OCI-LY7 (cell line): ENCODE measurements at regions of chr1 and their contacts with region 1.

Region 1: GRCh38 chr1:209755926-209756614 is at the start of gene TRAF3IP3:
- DNase-seq: peak; percentile 86
- H3K4me3 ChIP-seq: peak within 1 kb of the TSS; percentile 69
- H3K27ac ChIP-seq: peak within 1 kb of the TSS; percentile 74
- H3K4me1 ChIP-seq: peaks cover 37% of the 10 kb centered on the region
- CTCF ChIP-seq: no peak
- total RNA-seq, gene TRAF3IP3: 22.1 and 24.3 TPM in 2 replicates

Region 2: DNA sequence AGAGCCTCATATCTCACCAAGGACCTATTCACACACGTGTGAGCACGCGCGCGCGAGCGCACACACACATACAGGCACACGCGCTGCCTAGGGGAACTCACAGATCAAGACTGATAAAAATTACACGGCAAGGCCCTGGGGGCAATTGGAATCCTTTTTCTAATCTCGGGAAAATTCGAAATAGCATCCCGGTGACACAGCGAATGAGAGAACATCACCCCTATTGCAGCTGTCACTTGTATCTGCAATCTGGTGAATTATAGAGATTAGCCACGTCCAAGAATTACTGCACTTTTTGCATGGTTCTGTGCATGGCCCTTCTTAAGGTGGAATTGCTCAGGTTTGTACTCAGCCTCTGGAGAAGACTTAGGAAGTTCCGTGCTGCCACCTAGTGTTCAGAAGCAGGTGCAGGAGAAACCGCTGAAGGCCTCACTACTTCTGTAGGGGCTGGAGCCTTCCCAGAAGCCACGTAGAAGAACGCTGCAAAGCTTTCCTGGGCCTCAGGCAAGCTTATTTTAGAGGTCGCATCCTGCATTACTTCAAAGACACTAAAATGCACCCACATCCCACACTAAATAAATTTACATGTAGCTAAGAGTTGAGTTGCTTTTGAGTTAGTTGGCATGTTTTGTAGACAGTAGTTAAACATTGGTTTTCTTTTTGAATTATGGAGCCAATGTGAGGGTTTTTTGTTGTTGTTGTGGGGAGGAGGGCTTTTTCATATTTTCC is 401.8 kb before region 1 on chr1:
- CTCF ChIA-PET with region 1: no interaction called
- POLR2A ChIA-PET with region 1: no interaction called
- intact Hi-C with region 1: no loop called
- DNase-seq: peak; percentile 63
- H3K4me3 ChIP-seq: no peak overlapping the region
- H3K27ac ChIP-seq: no peak overlapping the region
- H3K4me1 ChIP-seq: no peaks in the 10 kb centered on the region
- CTCF ChIP-seq: peak; percentile 88

Region 3: GRCh38 chr1:209769171-209769904 is 13.3 kb after region 1 on chr1:
- CTCF ChIA-PET with region 1: interaction called, 5 read pairs
- POLR2A ChIA-PET with region 1: interaction called, 50 read pairs
- intact Hi-C with region 1: no loop called
- DNase-seq: peak; percentile 73
- H3K4me3 ChIP-seq: peak overlapping the region; percentile 10
- H3K27ac ChIP-seq: peak overlapping the region; percentile 63
- H3K4me1 ChIP-seq: peaks cover 34% of the 10 kb centered on the region
- CTCF ChIP-seq: no peak

Region 4: GRCh38 chr1:209774592-209774991 is 18.5 kb after region 1 on chr1:
- CTCF ChIA-PET with region 1: interaction called, 5 read pairs
- POLR2A ChIA-PET with region 1: interaction called, 50 read pairs
- intact Hi-C with region 1: no loop called
- DNase-seq: peak; percentile 44
- H3K4me3 ChIP-seq: peak overlapping the region; percentile 20
- H3K27ac ChIP-seq: peak overlapping the region; percentile 40
- H3K4me1 ChIP-seq: peaks cover 33% of the 10 kb centered on the region
- CTCF ChIP-seq: no peak

Region 5: DNA sequence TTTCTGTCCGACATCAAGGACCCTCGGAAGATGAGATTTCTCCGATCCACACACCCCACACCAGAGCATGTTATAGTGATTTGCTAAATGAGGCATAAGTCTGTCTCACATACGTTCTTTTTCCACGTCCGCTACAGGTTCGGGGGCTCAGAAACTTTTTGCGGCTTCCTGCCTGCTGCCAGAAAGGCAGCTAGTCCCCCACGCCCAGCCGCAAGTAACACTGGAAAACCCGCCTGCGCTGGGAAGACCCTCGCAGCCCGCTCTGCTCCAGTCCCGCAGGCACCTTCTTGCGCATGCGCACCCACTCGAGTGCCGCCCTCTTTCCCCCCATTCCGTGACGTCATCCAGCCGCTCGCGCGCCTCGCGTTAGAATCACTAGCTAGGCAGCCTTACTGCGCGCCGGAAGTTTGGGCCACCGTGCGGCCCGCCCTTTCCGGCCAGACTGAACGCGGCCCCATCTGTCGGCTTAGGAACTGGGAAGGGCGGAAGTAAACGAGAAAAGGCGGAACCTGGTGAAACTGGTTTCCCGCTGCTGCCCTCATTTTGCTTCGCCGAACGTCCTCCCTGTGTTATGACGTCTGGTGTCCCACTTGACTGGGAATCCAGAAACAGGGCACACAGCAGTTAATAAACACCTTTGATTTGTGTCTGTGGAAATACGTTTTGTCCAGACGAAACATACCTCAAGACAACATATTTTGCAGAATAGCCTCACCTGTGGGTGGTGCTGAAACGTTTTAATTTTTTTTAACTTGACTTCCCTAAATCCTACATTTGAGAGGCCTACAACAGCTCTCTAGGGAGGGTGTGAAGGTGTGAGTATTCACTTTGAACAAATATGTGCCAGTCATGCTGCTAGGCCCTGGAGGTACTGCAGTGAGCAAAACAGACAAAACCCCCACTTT is 28.4 kb after region 1 on chr1 and contains the start of gene C1orf74:
- CTCF ChIA-PET with region 1: no interaction called
- POLR2A ChIA-PET with region 1: interaction called, 21 read pairs
- intact Hi-C with region 1: loop called (anchors 1 kb)
- DNase-seq: peak; percentile 98
- H3K4me3 ChIP-seq: peak within 1 kb of the TSS; percentile 93
- H3K27ac ChIP-seq: peak within 1 kb of the TSS; percentile 52
- H3K4me1 ChIP-seq: peaks cover 15% of the 10 kb centered on the region
- CTCF ChIP-seq: peak; percentile 37; the same call in 1 of the 2 replicates
- total RNA-seq, gene C1orf74: 3.7 and 4.4 TPM in 2 replicates

Region 6: GRCh38 chr1:209827384-209828262 is 71.6 kb after region 1 on chr1 and contains the start of gene UTP25:
- CTCF ChIA-PET with region 1: no interaction called
- POLR2A ChIA-PET with region 1: interaction called, 12 read pairs
- intact Hi-C with region 1: loop called (anchors 2 kb)
- DNase-seq: peak; percentile 98
- H3K4me3 ChIP-seq: peak within 1 kb of the TSS; percentile 98
- H3K27ac ChIP-seq: peak within 1 kb of the TSS; percentile 56
- H3K4me1 ChIP-seq: peaks cover 19% of the 10 kb centered on the region
- CTCF ChIP-seq: peak; percentile 78
- total RNA-seq, gene UTP25: 10.4 and 12.8 TPM in 2 replicates

Region 7: DNA sequence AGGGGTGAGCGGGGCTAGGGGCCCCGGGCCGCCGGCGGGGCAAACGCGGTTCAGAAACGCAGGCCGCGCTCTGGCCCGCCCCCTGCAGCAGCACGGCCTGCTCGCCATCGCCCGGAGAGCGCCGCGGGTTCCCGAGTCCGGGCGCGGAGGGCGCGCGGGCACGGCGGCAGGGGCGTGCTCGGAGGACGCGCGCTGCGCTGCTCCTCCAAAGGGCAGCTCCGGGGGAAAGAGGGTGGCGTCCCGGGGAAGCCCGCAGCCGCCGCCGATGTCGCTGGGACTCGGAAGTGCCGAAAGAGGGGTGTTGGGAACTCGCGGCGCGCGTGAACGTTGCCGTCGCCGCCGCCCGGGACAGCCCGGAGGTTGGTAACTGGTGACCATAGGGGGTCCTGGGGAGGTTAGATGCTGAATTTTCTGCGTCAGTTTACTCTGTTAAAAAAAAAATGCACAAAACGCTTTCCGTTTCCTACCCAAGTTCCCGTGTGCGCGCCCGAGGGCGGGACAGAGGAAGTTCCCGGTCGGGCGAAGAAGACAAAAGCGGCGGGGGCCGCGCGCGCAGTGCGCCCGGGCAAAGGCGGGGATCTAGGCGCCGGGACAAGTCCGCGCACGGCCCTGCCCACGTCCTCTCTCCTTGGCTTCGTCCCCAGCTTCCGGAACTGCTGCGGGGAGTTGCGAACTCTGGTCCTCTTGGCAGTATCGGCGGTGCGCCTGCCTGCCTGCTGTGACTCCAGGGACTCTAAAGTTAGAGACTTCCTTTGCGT is 572.9 kb after region 1 on chr1 and contains the start of gene HHAT:
- CTCF ChIA-PET with region 1: no interaction called
- POLR2A ChIA-PET with region 1: interaction called, 4 read pairs
- intact Hi-C with region 1: loop called (anchors 10 kb)
- DNase-seq: peak; percentile 80
- H3K4me3 ChIP-seq: peak within 1 kb of the TSS; percentile 76
- H3K27ac ChIP-seq: peak within 1 kb of the TSS; percentile 75
- H3K4me1 ChIP-seq: peaks cover 56% of the 10 kb centered on the region
- CTCF ChIP-seq: 0 out of 2 replicates have a peak, but pooled peaks have one; percentile 30
- total RNA-seq, gene HHAT: 5.2 and 5.4 TPM in 2 replicates